Activated CD8-positive, alpha-beta T cell treated with anti-CD3 and anti-CD28 coated beads for 36 hours (primary cell): ENCODE measurements at regions of chr1 and their contacts with region 1.

Region 1: GRCh38 chr1:214261206-214262123 is 19.5 kb upstream of the SMYD2 start:
- DNase-seq: peak; percentile 86
- ATAC-seq: peak; percentile 90
- H3K4me3 Mint-ChIP-seq: no peak overlapping the region
- H3K27ac Mint-ChIP-seq: no peak overlapping the region
- H3K4me1 Mint-ChIP-seq: peaks cover 10% of the 10 kb centered on the region
- H3K27me3 Mint-ChIP-seq: peaks cover 45% of the 10 kb centered on the region
- CTCF ChIP-seq: peak; percentile 87

Region 2: DNA sequence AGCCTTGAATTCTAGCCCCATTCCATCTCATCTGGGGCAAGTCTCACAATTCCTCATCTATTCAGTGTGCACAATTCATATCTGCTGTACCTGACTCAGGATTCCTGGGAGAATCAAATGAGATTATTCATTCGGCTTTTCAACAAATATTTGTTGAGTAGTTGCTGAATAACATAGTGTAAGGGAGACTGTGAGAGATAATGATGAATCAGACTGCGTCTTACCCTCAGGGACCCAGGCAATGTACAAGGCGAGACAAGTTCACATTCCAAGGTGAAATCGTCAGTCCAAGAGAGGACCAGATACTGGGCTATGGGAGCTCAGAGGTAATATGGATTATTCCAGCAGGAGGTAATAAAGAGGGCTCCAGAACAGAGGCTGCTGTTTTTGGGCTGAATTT is 48.3 kb before region 1 on chr1:
- CTCF ChIA-PET with region 1: interaction called, 18 read pairs
- POLR2A ChIA-PET with region 1: no interaction called
- intact Hi-C with region 1: no loop called
- DNase-seq: no peak
- ATAC-seq: no peak
- H3K4me3 Mint-ChIP-seq: no peak overlapping the region
- H3K27ac Mint-ChIP-seq: no peak overlapping the region
- H3K4me1 Mint-ChIP-seq: peaks cover 2% of the 10 kb centered on the region
- H3K27me3 Mint-ChIP-seq: peaks cover 10% of the 10 kb centered on the region
- CTCF ChIP-seq: no peak

Region 3: GRCh38 chr1:214281021-214281719 is 19.7 kb after region 1 on chr1 and contains the start of gene SMYD2:
- CTCF ChIA-PET with region 1: interaction called, 54 read pairs
- POLR2A ChIA-PET with region 1: no interaction called
- intact Hi-C with region 1: no loop called
- DNase-seq: peak; percentile 71
- ATAC-seq: peak; percentile 75
- H3K4me3 Mint-ChIP-seq: peak within 1 kb of the TSS; percentile 87
- H3K27ac Mint-ChIP-seq: peak within 1 kb of the TSS; percentile 90
- H3K4me1 Mint-ChIP-seq: peaks cover 35% of the 10 kb centered on the region
- H3K27me3 Mint-ChIP-seq: no peaks in the 10 kb centered on the region
- CTCF ChIP-seq: no peak
- total RNA-seq, gene SMYD2: 37.4 to 40.6 TPM

Region 4: GRCh38 chr1:214310777-214311690 is 49.6 kb after region 1 on chr1:
- CTCF ChIA-PET with region 1: interaction called, 20 read pairs
- POLR2A ChIA-PET with region 1: no interaction called
- intact Hi-C with region 1: no loop called
- DNase-seq: no peak
- ATAC-seq: peak; percentile 45
- H3K4me3 Mint-ChIP-seq: peak overlapping the region; percentile 51
- H3K27ac Mint-ChIP-seq: no peak overlapping the region
- H3K4me1 Mint-ChIP-seq: peaks cover 28% of the 10 kb centered on the region
- H3K27me3 Mint-ChIP-seq: no peaks in the 10 kb centered on the region
- CTCF ChIP-seq: no peak

Region 5: GRCh38 chr1:214321705-214322453 is 60.4 kb after region 1 on chr1:
- CTCF ChIA-PET with region 1: interaction called, 505 read pairs
- POLR2A ChIA-PET with region 1: interaction called, 3 read pairs
- intact Hi-C with region 1: no loop called
- DNase-seq: no peak
- ATAC-seq: no peak
- H3K4me3 Mint-ChIP-seq: no peak overlapping the region
- H3K27ac Mint-ChIP-seq: no peak overlapping the region
- H3K4me1 Mint-ChIP-seq: no peaks in the 10 kb centered on the region
- H3K27me3 Mint-ChIP-seq: no peaks in the 10 kb centered on the region
- CTCF ChIP-seq: no peak

Region 6: DNA sequence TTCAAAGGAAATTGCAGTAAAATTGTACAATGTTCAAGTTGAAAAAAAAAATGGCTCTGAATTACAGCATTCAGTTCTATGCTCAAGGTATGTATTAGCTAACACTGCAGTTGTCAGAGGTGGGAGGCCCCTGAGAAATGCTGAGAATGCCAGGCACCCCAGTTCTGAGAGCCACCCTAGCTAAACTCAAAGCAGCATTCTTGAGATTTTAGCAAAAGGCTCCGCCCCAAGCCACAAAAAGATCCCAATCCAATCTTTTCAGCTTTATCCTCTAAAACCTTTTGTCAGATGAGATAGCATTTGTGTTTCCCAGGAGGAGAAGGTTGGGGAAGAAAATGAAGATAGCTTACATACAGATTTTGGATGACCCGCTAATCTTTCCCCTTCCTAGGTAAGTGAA is 88.3 kb after region 1 on chr1:
- CTCF ChIA-PET with region 1: interaction called, 15 read pairs
- POLR2A ChIA-PET with region 1: no interaction called
- intact Hi-C with region 1: no loop called
- DNase-seq: no peak
- ATAC-seq: no peak
- H3K4me3 Mint-ChIP-seq: no peak overlapping the region
- H3K27ac Mint-ChIP-seq: no peak overlapping the region
- H3K4me1 Mint-ChIP-seq: no peaks in the 10 kb centered on the region
- H3K27me3 Mint-ChIP-seq: peaks cover 2% of the 10 kb centered on the region
- CTCF ChIP-seq: no peak

Region 7: DNA sequence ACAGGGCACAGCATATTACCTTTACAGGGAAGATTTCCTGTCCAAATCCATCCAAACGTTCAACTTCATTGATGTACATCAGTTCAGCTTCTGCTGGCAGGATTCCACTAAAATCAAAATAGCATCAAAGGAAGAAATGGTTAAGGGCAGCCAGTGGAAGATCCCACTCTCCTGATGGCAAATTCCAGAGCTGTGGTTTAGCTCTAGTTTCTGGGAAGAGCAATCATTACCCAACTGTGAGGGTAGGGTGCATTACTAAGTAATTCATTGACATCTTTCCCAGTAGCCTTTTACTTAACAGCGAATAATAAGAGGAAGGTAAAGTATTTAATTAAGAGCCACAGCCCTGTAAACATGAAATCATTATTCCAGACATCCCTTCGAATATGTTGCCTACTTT is 140.2 kb after region 1 on chr1:
- CTCF ChIA-PET with region 1: no interaction called
- POLR2A ChIA-PET with region 1: no interaction called
- intact Hi-C with region 1: no loop called
- DNase-seq: no peak
- ATAC-seq: no peak
- H3K4me3 Mint-ChIP-seq: no peak overlapping the region
- H3K27ac Mint-ChIP-seq: no peak overlapping the region
- H3K4me1 Mint-ChIP-seq: peaks cover 20% of the 10 kb centered on the region
- H3K27me3 Mint-ChIP-seq: no peaks in the 10 kb centered on the region
- CTCF ChIP-seq: no peak

Region 8: DNA sequence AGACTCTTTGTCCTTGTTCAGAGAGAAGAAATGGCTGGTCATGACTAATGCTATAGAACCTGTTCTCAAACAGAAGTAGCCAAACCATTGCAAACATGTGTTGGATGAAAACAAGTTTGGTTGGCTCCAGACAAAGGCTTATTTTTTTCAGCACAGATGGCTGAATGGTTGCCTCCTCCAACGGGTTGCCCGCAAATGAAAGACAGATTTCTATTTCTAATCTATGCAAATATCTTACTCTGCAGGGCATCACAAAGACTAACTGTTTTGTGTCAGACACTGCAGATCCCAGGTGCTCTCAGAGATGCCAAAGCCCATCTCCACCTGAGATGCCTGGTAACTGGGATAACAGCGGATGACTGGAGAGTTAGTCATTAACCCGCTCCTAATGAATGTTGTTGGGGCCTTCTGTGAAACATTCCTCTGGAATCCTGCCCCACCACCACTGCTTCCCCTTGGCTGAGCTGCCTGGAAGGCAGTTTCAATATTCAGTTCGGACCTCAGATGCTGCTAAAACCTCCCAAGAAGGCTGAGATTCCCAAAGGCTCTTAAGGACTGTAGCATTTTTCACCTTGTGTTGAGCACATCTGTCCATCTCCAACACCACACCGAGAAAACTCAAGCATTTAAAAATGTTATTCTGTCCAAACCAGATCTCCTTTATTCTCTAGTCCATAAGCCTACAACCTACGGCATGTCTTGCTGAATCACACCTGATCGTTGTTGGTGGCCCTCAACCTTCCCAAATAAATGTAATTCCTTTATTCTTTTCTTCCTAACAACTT is 185.5 kb after region 1 on chr1:
- CTCF ChIA-PET with region 1: no interaction called
- POLR2A ChIA-PET with region 1: no interaction called
- intact Hi-C with region 1: no loop called
- DNase-seq: no peak
- ATAC-seq: no peak
- H3K4me3 Mint-ChIP-seq: no peak overlapping the region
- H3K27ac Mint-ChIP-seq: no peak overlapping the region
- H3K4me1 Mint-ChIP-seq: peaks cover 29% of the 10 kb centered on the region
- H3K27me3 Mint-ChIP-seq: peaks cover 2% of the 10 kb centered on the region
- CTCF ChIP-seq: no peak

Region 9: DNA sequence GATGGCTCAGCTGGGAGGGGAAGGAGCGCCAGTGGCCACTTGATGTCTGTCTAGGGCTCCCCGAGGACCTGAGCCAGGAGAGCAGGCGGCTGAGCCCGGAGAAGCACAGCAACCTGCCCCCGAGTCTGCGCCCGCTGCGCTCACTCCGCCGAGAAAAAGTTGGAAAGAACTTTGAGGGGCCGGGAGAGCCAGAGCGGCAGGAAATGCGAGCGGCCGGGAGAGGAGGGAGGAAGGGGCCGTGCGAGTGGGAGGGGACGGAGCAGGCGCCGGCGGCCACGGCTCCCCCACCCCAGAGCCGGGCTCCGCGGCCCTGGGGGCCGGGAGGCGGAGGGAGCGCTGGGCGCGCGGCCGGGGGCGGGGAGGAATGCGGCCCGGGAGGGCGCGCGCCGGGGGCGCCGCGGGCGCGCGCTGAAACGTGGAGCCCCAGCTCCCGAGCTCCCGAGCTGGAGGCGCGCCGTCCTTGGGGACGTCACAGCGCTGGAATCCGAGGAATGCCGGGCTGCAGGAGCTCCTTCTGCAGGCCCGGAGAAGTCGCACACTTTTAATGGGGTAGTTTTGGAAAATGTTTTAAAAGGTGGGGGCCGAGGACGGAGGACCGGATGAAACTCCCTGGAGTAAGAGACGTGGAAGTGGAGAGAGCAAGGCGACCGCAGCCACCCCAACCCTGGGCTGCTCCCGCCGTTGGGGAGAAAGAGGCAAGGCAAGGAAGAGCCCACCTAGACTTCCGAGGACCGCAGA is 290.1 kb after region 1 on chr1 and contains the start of gene PTPN14:
- CTCF ChIA-PET with region 1: no interaction called
- POLR2A ChIA-PET with region 1: no interaction called
- intact Hi-C with region 1: no loop called
- DNase-seq: peak; percentile 7
- ATAC-seq: peak; percentile 47
- H3K4me3 Mint-ChIP-seq: peak within 1 kb of the TSS; percentile 67
- H3K27ac Mint-ChIP-seq: no peak within 1 kb of the TSS
- H3K4me1 Mint-ChIP-seq: peaks cover 5% of the 10 kb centered on the region
- H3K27me3 Mint-ChIP-seq: peaks cover 50% of the 10 kb centered on the region
- CTCF ChIP-seq: no peak
- total RNA-seq, gene PTPN14: 0.27 to 0.34 TPM